ENCODE measurements at regions of chrX and their contacts with region 1.

Region 1: DNA sequence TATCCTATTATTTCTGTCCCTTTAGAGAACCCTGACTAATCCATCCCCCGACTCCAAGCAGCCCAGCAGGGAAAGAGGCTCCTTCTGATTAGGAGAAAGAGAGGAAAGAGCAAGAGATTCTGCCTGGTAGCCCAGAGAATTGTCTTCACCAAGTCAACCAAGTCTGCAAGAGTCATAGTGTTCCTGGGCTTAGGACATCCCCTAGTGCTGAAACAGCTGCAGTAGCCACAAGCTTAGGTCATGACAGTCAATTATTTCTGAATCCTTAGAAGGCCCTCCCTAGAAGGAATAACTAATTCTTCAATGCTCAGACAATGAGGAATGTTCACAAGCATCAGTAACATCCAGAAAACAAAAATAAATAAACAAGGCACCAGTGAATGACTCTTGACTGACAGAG is 480.3 kb upstream of the GRIA3 start:
- DNase-seq: peak; percentile 9
- H3K4me3 ChIP-seq: no peak overlapping the region
- H3K27ac ChIP-seq: no peak overlapping the region
- H3K4me1 ChIP-seq: no peaks in the 10 kb centered on the region
- H3K27me3 ChIP-seq: no peaks in the 10 kb centered on the region
- CTCF ChIP-seq: peak; percentile 32 to 54

Region 2: DNA sequence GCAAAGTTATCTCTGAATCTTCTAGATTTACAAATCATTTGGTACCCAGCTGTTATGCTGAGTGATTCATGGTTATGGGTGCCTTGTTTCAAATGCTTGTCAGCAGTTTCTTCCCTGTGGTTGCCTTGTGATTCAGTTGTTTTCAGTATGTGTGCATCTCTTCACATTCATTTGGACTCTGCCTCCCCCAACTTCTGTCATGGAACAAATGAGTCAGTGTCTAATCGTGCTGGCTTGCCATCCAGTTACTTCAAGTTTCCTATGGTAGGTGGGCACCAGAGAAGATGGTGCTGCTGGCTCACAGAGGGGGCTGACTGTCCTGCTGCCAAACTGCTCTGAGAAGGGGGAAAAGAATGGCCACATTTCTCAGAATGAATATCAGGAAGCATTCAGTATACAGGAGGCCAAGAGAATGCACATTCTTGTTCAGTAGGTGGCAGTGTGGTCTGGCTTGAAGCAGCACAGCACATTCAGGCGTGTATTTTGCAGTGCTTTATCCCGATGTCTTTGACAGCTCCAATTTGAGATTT is 1395.4 kb before region 1 on chrX:
- CTCF ChIA-PET with region 1: no interaction called
- dilution Hi-C with region 1: no loop called
- in situ Hi-C with region 1: no loop called
- intact Hi-C with region 1: loop called (anchors 10 kb)
- DNase-seq: peak; percentile 67
- H3K4me3 ChIP-seq: no peak overlapping the region
- H3K27ac ChIP-seq: no peak overlapping the region
- H3K4me1 ChIP-seq: no peaks in the 10 kb centered on the region
- H3K27me3 ChIP-seq: no peaks in the 10 kb centered on the region
- CTCF ChIP-seq: peak; percentile 38 to 60

Region 3: DNA sequence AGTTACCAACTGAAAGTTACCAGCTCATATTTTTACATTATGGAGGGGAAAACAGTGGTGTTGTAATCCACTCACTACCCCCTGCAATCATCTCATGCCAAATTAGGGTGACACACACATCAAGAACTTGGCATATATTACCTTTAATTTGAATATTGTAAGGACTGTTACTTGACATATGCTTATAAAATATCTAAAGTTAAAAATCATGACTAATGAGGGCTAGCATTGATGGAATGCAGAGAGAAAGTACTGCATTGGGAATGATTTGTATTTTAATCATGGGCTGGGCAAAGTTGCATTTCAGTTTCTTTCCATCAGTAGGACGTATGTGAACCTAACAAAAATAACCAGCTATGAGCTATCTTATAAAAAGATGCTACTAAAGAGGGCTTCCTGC is 37.2 kb before region 1 on chrX:
- CTCF ChIA-PET with region 1: no interaction called
- dilution Hi-C with region 1: no loop called
- in situ Hi-C with region 1: no loop called
- intact Hi-C with region 1: no loop called
- DNase-seq: no peak
- H3K4me3 ChIP-seq: no peak overlapping the region
- H3K27ac ChIP-seq: no peak overlapping the region
- H3K4me1 ChIP-seq: no peaks in the 10 kb centered on the region
- H3K27me3 ChIP-seq: no peaks in the 10 kb centered on the region
- CTCF ChIP-seq: no peak